ENCODE measurements at regions of chr13 and their contacts with region 1.

Region 1: DNA sequence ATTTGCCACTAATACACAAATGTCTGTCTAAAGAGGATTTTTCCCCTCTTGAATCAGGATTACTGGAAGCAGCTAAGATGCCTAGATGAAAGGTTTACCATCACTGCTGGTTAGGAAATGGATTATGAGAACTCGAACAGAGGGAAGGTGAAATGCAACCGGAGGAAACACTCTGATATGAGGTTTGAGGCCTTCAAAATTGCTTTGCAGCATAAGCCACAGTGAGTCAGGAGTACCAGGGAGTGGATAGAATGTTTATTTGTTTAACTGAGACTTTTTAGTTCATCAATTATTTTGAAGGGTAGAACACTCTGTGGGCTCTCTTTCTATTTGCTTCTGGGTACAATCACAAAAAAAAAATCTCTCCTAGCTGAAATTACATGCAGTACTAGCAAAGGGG is 18.1 kb downstream of the CDADC1 start:
- DNase-seq: peak in 2 of 3 donors; percentile 61 to 71
- H3K4me3 ChIP-seq: peak overlapping the region in 1 of 7 experiments; percentile 30
- H3K27ac ChIP-seq: peak overlapping the region; percentile 16 to 78
- H3K4me1 ChIP-seq: peaks cover 0 to 11% (median 3%) of the 10 kb centered on the region in 4 experiments
- H3K27me3 ChIP-seq: no peaks in the 10 kb centered on the region

Region 2: DNA sequence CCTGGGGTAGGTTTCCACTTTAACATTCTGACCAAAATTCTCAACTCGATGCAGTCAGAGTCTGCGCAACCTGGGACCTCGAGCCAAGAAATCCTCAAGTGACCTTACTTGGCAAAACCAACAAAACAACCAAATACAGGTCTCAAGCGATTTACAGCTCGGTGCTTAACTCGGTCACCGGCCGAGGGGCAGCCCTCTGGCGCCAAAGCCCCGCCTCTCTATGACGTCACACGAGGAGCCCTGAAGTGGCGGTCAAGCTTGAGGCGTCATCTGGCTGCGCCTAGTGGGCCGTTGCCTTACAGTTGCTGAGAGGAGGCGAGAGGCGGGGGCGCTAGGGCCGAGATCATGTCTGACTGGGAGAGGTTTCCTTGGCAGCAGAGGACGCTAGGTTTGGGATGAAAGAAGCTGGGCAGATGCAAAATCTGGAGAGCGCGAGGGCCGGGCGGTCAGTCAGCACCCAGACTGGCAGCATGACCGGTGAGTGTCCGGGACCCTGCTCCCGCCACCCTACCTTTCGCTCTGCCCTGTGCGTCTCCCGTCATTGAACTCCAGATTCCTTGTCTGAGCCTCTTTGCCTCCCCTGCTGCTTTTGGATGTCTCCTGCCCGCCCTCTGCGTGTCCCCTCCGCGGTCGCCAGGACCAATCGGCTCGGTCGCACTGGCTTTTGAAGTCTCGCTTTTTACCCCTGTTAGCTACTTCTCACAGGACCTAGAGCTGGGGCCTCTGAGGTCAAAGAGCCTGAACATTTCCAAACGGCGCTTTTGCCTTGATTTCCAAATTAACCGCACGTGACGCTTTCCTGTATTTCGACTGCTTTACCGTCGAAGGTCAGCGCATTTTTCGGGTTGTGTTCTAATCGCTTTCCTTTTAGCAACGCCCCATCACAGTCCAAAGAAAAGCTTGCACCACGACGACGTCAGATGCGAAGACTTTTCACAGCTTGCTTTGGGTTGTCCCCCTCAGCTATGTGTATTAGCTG is 17.9 kb before region 1 on chr13 and contains the start of gene CDADC1:
- CTCF ChIA-PET with region 1: interaction called, 13 read pairs
- POLR2A ChIA-PET with region 1: interaction called, 4 read pairs
- DNase-seq: peak; percentile 96 to 97 (median 97)
- H3K4me3 ChIP-seq: peak within 1 kb of the TSS; percentile 83 to 100 (median 96)
- H3K27ac ChIP-seq: peak within 1 kb of the TSS; percentile 90 to 96
- H3K4me1 ChIP-seq: peaks cover 21 to 59% (median 31%) of the 10 kb centered on the region in 4 experiments
- H3K27me3 ChIP-seq: no peaks in the 10 kb centered on the region

Region 3: GRCh38 chr13:49253310-49253709 is 12.5 kb before region 1 on chr13:
- CTCF ChIA-PET with region 1: interaction called, 13 read pairs
- POLR2A ChIA-PET with region 1: no interaction called
- DNase-seq: peak in 2 of 3 donors; percentile 32 to 40
- H3K4me3 ChIP-seq: peak overlapping the region in 2 of 7 experiments; percentile 6 to 56
- H3K27ac ChIP-seq: peak overlapping the region; percentile 61 to 83
- H3K4me1 ChIP-seq: peaks cover 29 to 89% (median 39%) of the 10 kb centered on the region in 4 experiments
- H3K27me3 ChIP-seq: no peaks in the 10 kb centered on the region

Region 4: DNA sequence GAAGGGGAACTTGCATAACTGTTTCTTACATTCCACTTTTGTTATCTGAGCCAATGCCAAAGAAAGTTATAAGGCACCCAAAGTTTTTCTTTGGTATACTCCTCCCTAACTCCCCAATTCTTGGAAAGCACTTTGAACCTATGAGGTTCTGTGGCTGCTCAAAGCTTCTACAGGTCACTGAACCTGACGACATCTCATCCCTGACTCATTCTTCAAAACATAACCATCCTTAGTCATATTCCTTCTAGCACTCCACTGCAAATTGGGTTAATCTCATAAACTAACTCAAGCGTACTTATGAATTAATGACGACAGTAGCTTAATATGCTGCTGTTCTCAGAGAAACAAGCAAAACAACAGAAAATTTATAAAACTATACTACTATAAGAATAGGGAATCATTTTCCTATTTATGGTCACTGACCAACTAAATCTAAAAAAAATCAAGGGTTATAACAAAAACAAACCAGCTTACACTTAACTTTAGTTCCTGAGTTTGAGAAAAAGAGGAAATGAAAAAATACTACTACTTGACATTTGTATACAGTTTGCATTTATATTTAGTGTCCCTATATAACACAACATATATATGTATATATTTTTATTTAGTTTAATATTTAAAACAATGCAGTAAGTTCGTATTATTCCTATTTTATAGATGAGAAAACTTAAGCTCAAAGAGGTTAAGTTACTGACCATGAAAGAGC is 108.9 kb after region 1 on chr13:
- CTCF ChIA-PET with region 1: no interaction called
- POLR2A ChIA-PET with region 1: no interaction called
- DNase-seq: no peak
- H3K4me3 ChIP-seq: no peak overlapping the region
- H3K27ac ChIP-seq: no peak overlapping the region
- H3K4me1 ChIP-seq: peaks cover 0 to 3% (median 0%) of the 10 kb centered on the region in 4 experiments
- H3K27me3 ChIP-seq: no peaks in the 10 kb centered on the region

Region 5: GRCh38 chr13:49530457-49530856 is 264.6 kb after region 1 on chr13:
- CTCF ChIA-PET with region 1: no interaction called
- POLR2A ChIA-PET with region 1: interaction called, 10 read pairs
- DNase-seq: peak; percentile 81 to 92 (median 90)
- H3K4me3 ChIP-seq: peak overlapping the region in 3 of 7 experiments; percentile 1 to 11 (median 2)
- H3K27ac ChIP-seq: peak overlapping the region; percentile 64 to 82
- H3K4me1 ChIP-seq: peaks cover 20 to 78% (median 27%) of the 10 kb centered on the region in 4 experiments
- H3K27me3 ChIP-seq: no peaks in the 10 kb centered on the region

Measured in common myeloid progenitor, CD34-positive (primary cell).